ENCODE measurements at regions of chr3 and their contacts with region 1.

Region 1: GRCh38 chr3:88369767-88370166 is 220.0 kb downstream of the C3orf38 start:
- DNase-seq: no peak
- ATAC-seq: no peak
- H3K4me3 ChIP-seq: no peak overlapping the region
- H3K27ac ChIP-seq: no peak overlapping the region
- H3K4me1 ChIP-seq: no peaks in the 10 kb centered on the region
- H3K27me3 ChIP-seq: no peaks in the 10 kb centered on the region
- CTCF ChIP-seq: no peak
- EP300 ChIP-seq: no peak
- POLR2A ChIP-seq: no peak
- RAD21 ChIP-seq: no peak

Region 2: DNA sequence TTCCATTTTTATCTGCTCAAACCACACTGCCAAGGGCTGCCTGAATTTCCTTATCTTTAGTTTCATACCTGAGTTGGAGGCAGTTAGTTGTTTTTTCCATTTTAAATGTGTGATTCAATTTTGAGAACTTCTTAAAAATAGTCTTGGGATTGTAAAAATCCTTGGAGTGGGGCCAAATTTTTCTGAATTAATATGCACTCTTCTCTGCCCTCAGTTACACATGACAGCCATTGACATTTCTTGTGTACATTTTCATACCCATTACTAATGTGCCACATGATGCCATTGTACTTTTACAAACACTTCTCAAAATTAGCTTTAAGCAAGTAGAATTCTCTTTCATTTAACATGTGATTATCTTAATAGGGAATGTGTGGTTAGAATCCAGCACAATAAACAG is 78.3 kb before region 1 on chr3:
- CTCF ChIA-PET with region 1: no interaction called
- POLR2A ChIA-PET with region 1: no interaction called
- RAD21 ChIA-PET with region 1: no interaction called
- SMC1A ChIA-PET with region 1: no interaction called
- in situ Hi-C with region 1: no loop called
- intact Hi-C with region 1: no loop called
- DNase-seq: no peak
- ATAC-seq: no peak
- H3K4me3 ChIP-seq: no peak overlapping the region
- H3K27ac ChIP-seq: no peak overlapping the region
- H3K4me1 ChIP-seq: no peaks in the 10 kb centered on the region
- H3K27me3 ChIP-seq: no peaks in the 10 kb centered on the region
- CTCF ChIP-seq: no peak
- EP300 ChIP-seq: no peak
- POLR2A ChIP-seq: no peak
- RAD21 ChIP-seq: no peak

Region 3: GRCh38 chr3:88346643-88347042 is 23.1 kb before region 1 on chr3:
- CTCF ChIA-PET with region 1: no interaction called
- POLR2A ChIA-PET with region 1: no interaction called
- RAD21 ChIA-PET with region 1: no interaction called
- SMC1A ChIA-PET with region 1: no interaction called
- in situ Hi-C with region 1: no loop called
- intact Hi-C with region 1: no loop called
- DNase-seq: no peak
- ATAC-seq: no peak
- H3K4me3 ChIP-seq: no peak overlapping the region
- H3K27ac ChIP-seq: no peak overlapping the region
- H3K4me1 ChIP-seq: no peaks in the 10 kb centered on the region
- H3K27me3 ChIP-seq: no peaks in the 10 kb centered on the region
- CTCF ChIP-seq: no peak
- EP300 ChIP-seq: no peak
- POLR2A ChIP-seq: no peak
- RAD21 ChIP-seq: no peak

Region 4: GRCh38 chr3:88412346-88412745 is 42.6 kb after region 1 on chr3:
- CTCF ChIA-PET with region 1: no interaction called
- POLR2A ChIA-PET with region 1: no interaction called
- RAD21 ChIA-PET with region 1: no interaction called
- SMC1A ChIA-PET with region 1: no interaction called
- in situ Hi-C with region 1: no loop called
- intact Hi-C with region 1: loop called (anchors 2 kb)
- DNase-seq: no peak
- ATAC-seq: no peak
- H3K4me3 ChIP-seq: no peak overlapping the region
- H3K27ac ChIP-seq: no peak overlapping the region
- H3K4me1 ChIP-seq: no peaks in the 10 kb centered on the region
- H3K27me3 ChIP-seq: no peaks in the 10 kb centered on the region
- CTCF ChIP-seq: no peak
- EP300 ChIP-seq: no peak
- POLR2A ChIP-seq: no peak
- RAD21 ChIP-seq: no peak

Measured in GM12878 (cell line).